Gastrocnemius medialis (tissue), 4 donors: ENCODE measurements at regions of chr6 and their contacts with region 1.

Region 1: DNA sequence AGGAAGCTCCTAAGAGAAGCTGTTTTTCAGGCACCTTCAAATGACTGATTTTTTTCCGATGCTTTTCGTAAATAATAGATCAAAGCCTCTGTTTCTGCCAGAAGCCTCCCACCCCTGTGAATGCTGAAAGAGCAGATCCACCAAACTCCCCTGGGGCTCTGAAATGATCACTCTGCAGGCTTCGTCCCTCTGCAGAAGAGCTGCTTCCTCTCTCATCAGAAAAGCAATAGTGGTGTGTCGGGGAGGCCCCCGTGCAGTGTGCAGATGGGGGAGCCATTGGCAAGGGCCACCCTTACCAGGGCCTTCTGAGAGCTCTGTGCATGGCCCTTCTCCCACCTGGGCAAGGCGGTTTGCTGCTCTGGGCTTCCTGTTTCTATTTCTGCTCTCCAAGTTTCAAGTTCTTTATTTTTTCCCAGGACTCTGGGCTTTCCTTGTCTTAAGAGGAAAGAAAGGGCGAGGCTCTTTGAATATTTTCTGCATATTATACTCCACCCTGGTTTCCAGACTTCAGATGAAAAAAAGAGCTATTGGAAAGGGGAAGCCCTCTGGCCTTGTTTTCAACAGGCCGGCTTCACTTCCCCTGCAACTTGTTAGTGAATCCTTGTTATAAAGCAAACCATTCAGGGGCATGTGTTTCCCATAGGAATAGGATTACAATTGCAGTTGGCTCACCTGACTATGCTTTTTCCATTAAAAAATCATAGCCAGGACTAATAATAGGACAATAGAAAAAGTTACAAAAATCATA is 155.2 kb downstream of the TTLL2 start:
- DNase-seq: no peak
- ATAC-seq: peak in 1 of 2 donors; percentile 45
- H3K4me3 ChIP-seq: no peak overlapping the region
- H3K27ac ChIP-seq: no peak overlapping the region
- H3K4me1 ChIP-seq: peaks cover 0 to 5% of the 10 kb centered on the region in 2 donors
- H3K27me3 ChIP-seq: peaks cover 0 to 2% (median 0%) of the 10 kb centered on the region in 3 donors
- CTCF ChIP-seq: no peak
- POLR2A ChIP-seq: no peak

Region 2: DNA sequence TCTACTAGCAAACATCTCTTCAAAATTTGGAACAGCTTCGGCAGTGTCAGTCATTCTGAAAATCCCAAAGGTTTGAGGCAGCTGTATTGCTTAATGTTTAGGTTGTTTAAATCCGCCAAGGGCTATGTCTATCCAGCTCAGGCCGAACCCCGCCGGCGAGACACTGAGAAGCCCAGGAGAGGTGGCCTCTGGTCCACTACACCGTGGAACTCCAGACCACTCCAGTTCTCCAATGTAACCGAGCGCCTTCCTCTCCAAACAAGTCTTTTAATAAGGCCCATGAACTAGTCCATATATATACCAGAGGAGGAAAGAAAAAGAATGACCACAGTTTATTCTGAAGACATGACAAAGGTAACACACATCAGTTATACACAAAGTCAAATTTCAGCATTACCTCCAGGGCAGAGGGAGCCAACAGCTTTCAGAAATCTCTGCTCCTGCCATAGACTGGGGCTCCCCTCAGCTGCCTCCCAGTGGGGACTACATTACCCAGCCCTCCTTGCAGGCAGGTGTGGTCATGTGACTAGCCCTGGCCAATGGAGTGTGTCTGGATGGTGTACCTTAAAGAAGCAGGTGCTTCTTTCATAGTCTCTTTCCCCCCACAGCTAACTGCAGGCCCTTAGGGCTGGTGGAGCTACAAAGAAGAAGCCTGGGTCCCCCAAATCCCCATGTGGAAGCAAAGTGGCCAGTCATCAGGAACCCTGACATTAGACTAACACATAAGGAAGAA is 893.5 kb before region 1 on chr6 and contains the start of gene RAMACL:
- in situ Hi-C with region 1: no loop called
- intact Hi-C with region 1: no loop called
- DNase-seq: peak in 1 of 2 donors; percentile 52
- ATAC-seq: peak; percentile 31 to 85
- H3K4me3 ChIP-seq: no peak within 1 kb of the TSS
- H3K27ac ChIP-seq: no peak within 1 kb of the TSS
- H3K4me1 ChIP-seq: peaks cover 26 to 31% of the 10 kb centered on the region in 2 donors
- H3K27me3 ChIP-seq: no peaks in the 10 kb centered on the region
- CTCF ChIP-seq: no peak
- POLR2A ChIP-seq: no peak
- total RNA-seq, gene RAMACL: 0.18 to 5.6 (median 0.58) TPM

Region 3: DNA sequence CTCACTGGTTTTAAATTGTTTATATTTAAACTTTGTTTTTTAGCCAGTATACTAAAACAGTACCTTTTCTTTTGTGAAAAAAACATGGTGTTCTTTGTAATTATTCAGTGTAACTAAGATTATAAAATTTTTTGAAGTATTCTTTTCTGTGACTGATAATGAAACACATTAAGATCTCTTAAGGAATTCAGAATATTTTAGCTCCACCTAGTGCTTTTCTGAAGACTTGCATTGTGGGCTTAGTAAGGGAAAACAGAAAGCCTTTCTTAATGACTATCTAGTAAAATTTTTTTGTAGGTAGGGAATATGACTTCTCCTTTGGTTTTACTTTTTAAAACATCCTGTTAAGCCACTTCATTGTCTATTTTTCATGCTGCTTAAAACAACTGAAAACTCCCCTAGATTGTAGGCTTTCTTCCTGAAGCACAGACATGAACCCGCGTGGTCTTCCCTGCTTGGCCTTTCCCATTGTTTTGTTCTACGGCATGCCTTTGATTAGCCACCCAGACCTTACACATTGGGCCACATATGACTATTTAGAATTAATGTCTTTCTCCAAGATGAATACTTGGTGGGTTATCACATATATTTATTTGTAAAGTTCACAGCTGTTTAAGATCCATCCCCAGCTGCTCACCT is 418.7 kb after region 1 on chr6:
- in situ Hi-C with region 1: loop called in 3 of 4 experiments (anchors 5 to 10 kb)
- intact Hi-C with region 1: no loop called
- DNase-seq: no peak
- ATAC-seq: peak in 1 of 2 donors; percentile 30
- H3K4me3 ChIP-seq: no peak overlapping the region
- H3K27ac ChIP-seq: no peak overlapping the region
- H3K4me1 ChIP-seq: peaks cover 0 to 8% of the 10 kb centered on the region in 2 donors
- H3K27me3 ChIP-seq: no peaks in the 10 kb centered on the region
- CTCF ChIP-seq: peak; percentile 45 to 77 (median 65)
- POLR2A ChIP-seq: no peak